ENCODE measurements at regions of chr17 and their contacts with region 1.

Region 1: DNA sequence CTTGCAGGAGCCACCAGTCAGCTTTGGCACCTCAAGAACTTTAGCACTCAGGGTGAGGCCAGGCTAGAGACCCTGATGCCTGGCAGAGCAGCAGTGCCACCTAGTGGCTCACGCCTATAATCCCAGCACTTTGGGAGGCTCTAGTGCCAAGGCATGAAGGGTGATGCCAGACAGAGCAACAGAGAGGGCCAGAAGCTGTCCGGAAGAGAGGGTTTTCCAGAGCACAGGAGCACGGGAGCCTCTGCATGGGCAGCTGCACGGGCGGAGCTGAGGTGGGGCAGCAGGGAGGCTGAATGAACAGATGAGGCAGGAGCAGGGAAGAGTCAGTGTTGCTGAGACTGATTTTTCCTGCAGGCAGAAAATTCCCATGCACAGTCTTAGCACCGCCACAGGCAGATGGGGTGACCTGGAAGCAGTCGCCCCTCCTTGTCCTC is 38.9 kb downstream of the MYH3 start:
- DNase-seq: peak; percentile 47 to 88
- H3K4me3 ChIP-seq: no peak overlapping the region
- CTCF ChIP-seq: peak in 1 of 3 donors; percentile 71
- POLR2A ChIP-seq: no peak

Region 2: GRCh38 chr17:10327640-10328039 is 290.6 kb before region 1 on chr17:
- intact Hi-C with region 1: loop called (anchors 10 kb)
- DNase-seq: peak; percentile 82 to 95
- H3K4me3 ChIP-seq: no peak overlapping the region
- CTCF ChIP-seq: peak in 1 of 3 donors; percentile 61
- POLR2A ChIP-seq: no peak

Region 3: GRCh38 chr17:10683853-10684252 is 65.6 kb after region 1 on chr17:
- intact Hi-C with region 1: no loop called
- DNase-seq: no peak
- H3K4me3 ChIP-seq: no peak overlapping the region
- CTCF ChIP-seq: no peak
- POLR2A ChIP-seq: no peak